Mammary epithelial cell (primary cell): ENCODE measurements at regions of chr19 and their contacts with region 1.

Region 1: GRCh38 chr19:38658462-38659306 is 11.2 kb downstream of the ACTN4 start:
- DNase-seq: peak; percentile 99
- H3K4me3 ChIP-seq: peak overlapping the region in 1 of 3 experiments; percentile 44
- H3K27ac ChIP-seq: peak overlapping the region; percentile 100
- H3K4me1 ChIP-seq: peaks cover 93% of the 10 kb centered on the region
- H3K27me3 ChIP-seq: no peaks in the 10 kb centered on the region
- CTCF ChIP-seq: no peak

Region 2: GRCh38 chr19:38204096-38204495 is 454.6 kb before region 1 on chr19:
- CTCF ChIA-PET with region 1: no interaction called
- dilution Hi-C with region 1: no loop called
- in situ Hi-C with region 1: no loop called
- intact Hi-C with region 1: no loop called
- DNase-seq: no peak
- H3K4me3 ChIP-seq: no peak overlapping the region
- H3K27ac ChIP-seq: no peak overlapping the region
- H3K4me1 ChIP-seq: no peaks in the 10 kb centered on the region
- H3K27me3 ChIP-seq: no peaks in the 10 kb centered on the region
- CTCF ChIP-seq: no peak

Region 3: DNA sequence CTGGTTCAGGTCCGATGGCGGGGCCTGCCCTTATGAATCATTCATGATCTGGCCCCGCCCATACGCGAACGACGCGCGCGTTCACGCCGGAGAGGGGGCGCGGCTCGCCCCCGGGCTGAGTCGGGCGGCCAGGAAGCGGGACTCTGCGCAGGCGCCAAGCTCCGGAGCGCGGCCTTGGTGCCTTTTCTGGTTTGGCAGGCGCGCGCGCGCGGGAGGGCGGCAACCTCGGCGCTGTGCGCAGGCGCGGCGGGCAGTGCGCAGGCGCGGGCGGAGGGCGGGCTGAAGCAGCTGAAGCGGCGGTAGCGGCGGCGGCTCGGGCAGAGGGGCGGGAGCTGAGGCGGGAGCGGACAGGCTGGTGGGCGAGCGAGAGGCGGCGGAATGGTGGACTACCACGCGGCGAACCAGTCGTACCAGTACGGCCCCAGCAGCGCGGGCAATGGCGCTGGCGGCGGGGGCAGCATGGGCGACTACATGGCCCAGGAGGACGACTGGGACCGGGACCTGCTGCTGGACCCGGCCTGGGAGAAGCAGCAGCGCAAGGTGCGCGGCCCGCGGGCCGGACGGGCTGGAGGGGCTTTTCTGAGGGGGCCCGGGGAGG is 11.2 kb before region 1 on chr19 and contains the start of gene ACTN4:
- CTCF ChIA-PET with region 1: no interaction called
- dilution Hi-C with region 1: no loop called
- in situ Hi-C with region 1: no loop called
- intact Hi-C with region 1: loop called (anchors 1 kb)
- DNase-seq: peak; percentile 96
- H3K4me3 ChIP-seq: peak within 1 kb of the TSS; percentile 89 to 99 (median 95)
- H3K27ac ChIP-seq: peak within 1 kb of the TSS; percentile 100
- H3K4me1 ChIP-seq: peaks cover 20% of the 10 kb centered on the region
- H3K27me3 ChIP-seq: no peaks in the 10 kb centered on the region
- CTCF ChIP-seq: no peak
- total RNA-seq, gene ACTN4: 951 to 1,146 TPM

Region 4: GRCh38 chr19:38675611-38676010 is 16.9 kb after region 1 on chr19:
- CTCF ChIA-PET with region 1: no interaction called
- dilution Hi-C with region 1: no loop called
- in situ Hi-C with region 1: no loop called
- intact Hi-C with region 1: loop called (anchors 1 kb)
- DNase-seq: no peak
- H3K4me3 ChIP-seq: no peak overlapping the region
- H3K27ac ChIP-seq: peak overlapping the region; percentile 99
- H3K4me1 ChIP-seq: peaks cover 74% of the 10 kb centered on the region
- H3K27me3 ChIP-seq: no peaks in the 10 kb centered on the region
- CTCF ChIP-seq: no peak

Region 5: GRCh38 chr19:38683393-38684080 is 24.9 kb after region 1 on chr19:
- CTCF ChIA-PET with region 1: no interaction called
- dilution Hi-C with region 1: no loop called
- in situ Hi-C with region 1: no loop called
- intact Hi-C with region 1: loop called (anchors 1 kb)
- DNase-seq: peak; percentile 99
- H3K4me3 ChIP-seq: no peak overlapping the region
- H3K27ac ChIP-seq: peak overlapping the region; percentile 99
- H3K4me1 ChIP-seq: peaks cover 76% of the 10 kb centered on the region
- H3K27me3 ChIP-seq: no peaks in the 10 kb centered on the region
- CTCF ChIP-seq: no peak

Region 6: DNA sequence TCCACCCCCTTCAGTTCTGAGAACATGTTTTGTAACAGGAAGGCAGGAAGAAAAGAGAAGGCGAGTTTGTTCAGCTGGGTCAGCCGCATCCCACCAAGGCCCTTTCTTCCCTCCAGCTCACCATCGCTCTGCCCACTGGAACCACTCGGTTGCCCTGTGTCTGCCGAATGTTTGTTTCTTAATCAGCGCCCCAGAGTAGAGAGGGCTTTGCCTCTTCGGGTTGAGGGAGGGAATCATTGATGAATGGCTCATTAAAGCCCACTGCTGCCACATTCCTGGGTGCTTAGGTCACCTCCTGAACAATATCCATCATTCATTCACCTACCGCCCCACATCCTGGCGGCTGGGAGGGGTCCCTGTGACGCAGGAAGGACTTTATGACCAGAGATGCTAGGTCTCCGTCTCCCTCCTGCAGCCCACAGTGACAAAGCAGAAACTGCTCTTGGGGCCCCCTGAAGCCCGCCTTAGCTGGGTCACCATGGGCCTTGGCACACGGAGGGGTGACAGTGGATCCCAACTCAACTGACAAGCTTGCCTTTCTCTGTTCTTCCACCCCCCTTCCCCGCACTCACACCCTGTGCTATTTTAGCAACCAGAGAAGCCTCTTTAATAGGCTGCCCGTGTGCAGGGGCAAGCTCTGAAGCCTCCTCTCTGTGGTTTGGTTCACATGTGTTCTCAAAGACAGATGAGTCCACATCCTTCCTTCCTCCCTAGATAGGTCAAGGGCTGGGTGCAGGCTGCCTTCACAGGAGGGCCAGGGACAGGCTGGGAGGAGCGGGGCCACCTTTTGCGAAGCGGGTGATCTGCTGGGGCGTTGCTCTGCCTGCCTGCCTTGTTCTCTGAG is 34.9 kb after region 1 on chr19:
- CTCF ChIA-PET with region 1: no interaction called
- dilution Hi-C with region 1: no loop called
- in situ Hi-C with region 1: loop called (anchors 5 kb)
- intact Hi-C with region 1: loop called (anchors 1 kb)
- DNase-seq: peak; percentile 98
- H3K4me3 ChIP-seq: peak overlapping the region in 2 of 3 experiments; percentile 5 to 15
- H3K27ac ChIP-seq: peak overlapping the region; percentile 99
- H3K4me1 ChIP-seq: peaks cover 93% of the 10 kb centered on the region
- H3K27me3 ChIP-seq: no peaks in the 10 kb centered on the region
- CTCF ChIP-seq: no peak

Region 7: GRCh38 chr19:38711726-38712153 is 53.1 kb after region 1 on chr19:
- CTCF ChIA-PET with region 1: no interaction called
- dilution Hi-C with region 1: loop called (anchors 5 kb)
- in situ Hi-C with region 1: no loop called
- intact Hi-C with region 1: no loop called
- DNase-seq: peak; percentile 83
- H3K4me3 ChIP-seq: no peak overlapping the region
- H3K27ac ChIP-seq: peak overlapping the region; percentile 7
- H3K4me1 ChIP-seq: peaks cover 52% of the 10 kb centered on the region
- H3K27me3 ChIP-seq: no peaks in the 10 kb centered on the region
- CTCF ChIP-seq: peak in 1 of 2 donors; percentile 9

Region 8: GRCh38 chr19:39001041-39001440 is 342.4 kb after region 1 on chr19:
- CTCF ChIA-PET with region 1: no interaction called
- dilution Hi-C with region 1: no loop called
- in situ Hi-C with region 1: no loop called
- intact Hi-C with region 1: no loop called
- DNase-seq: no peak
- H3K4me3 ChIP-seq: no peak overlapping the region
- H3K27ac ChIP-seq: no peak overlapping the region
- H3K4me1 ChIP-seq: no peaks in the 10 kb centered on the region
- H3K27me3 ChIP-seq: no peaks in the 10 kb centered on the region
- CTCF ChIP-seq: no peak

Region 9: GRCh38 chr19:39166571-39167391 is 508.1 kb after region 1 on chr19:
- CTCF ChIA-PET with region 1: no interaction called
- dilution Hi-C with region 1: no loop called
- in situ Hi-C with region 1: no loop called
- intact Hi-C with region 1: no loop called
- DNase-seq: peak; percentile 42
- H3K4me3 ChIP-seq: peak overlapping the region in 2 of 3 experiments; percentile 19 to 39
- H3K27ac ChIP-seq: no peak overlapping the region
- H3K4me1 ChIP-seq: peaks cover 19% of the 10 kb centered on the region
- H3K27me3 ChIP-seq: no peaks in the 10 kb centered on the region
- CTCF ChIP-seq: no peak